Mammary epithelial cell (primary cell): ENCODE measurements at regions of chr10 and their contacts with region 1.

Region 1: DNA sequence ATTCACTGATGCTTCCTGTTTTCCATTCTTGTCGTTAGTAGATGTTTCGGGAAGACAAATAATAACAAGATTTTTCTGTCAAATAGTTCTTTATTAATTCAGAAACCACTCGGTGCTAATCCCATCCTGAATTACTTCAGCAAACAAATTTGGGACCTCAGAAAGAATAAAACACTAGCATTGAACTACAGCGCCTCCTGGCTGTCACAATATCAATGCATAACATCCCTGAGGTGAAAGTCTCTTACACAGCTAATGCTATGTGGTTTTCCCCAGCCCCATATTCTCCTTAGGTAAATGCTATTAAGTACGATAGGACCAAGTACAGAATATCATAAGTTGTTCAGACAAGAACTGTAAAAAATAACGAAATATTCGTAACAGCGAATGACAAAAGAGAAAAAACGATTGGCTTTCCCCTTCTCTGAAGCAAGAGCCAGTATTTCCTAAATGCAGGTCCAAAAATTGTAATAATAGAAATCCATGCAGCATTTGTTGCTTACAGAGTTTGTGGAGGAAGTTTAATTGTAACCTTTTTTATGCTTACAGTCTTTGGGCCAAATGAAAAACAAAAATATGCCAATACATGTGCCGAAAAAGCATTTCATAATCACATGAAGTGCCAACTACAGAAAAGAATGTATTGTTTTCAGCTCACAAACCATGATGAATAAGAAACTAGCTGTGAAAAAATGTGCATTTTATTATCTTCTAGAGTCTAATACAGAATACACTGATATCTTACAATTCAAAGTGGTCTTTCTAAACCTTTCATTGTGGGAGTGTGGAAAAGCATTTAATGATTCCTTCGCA is 47.3 kb downstream of the MYPN start:
- DNase-seq: peak; percentile 43
- H3K4me3 ChIP-seq: no peak overlapping the region
- H3K27ac ChIP-seq: no peak overlapping the region
- H3K4me1 ChIP-seq: peaks cover 14% of the 10 kb centered on the region
- H3K27me3 ChIP-seq: no peaks in the 10 kb centered on the region
- CTCF ChIP-seq: peak; percentile 84 to 97

Region 2: DNA sequence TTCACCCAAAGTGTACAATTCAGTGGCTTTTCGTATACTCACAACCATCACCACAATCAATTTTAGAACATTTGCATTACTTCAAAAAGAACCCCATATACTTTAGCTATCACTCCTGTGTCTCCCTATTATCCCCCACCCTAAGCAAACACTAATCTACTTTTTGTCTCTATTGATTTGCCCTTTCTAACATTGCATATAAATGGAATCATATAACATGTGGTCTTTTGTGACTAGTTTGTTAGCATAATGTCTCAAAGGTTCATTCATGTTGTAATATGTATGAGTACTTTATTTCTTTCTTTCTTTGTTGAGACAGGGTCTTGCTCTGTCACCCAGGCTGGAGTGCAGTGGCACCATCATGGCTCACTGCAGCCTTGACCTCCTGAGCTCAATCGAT is 297.6 kb before region 1 on chr10:
- CTCF ChIA-PET with region 1: no interaction called
- dilution Hi-C with region 1: no loop called
- in situ Hi-C with region 1: no loop called
- intact Hi-C with region 1: loop called (anchors 5 kb)
- DNase-seq: no peak
- H3K4me3 ChIP-seq: no peak overlapping the region
- H3K27ac ChIP-seq: no peak overlapping the region
- H3K4me1 ChIP-seq: peaks cover 3% of the 10 kb centered on the region
- H3K27me3 ChIP-seq: no peaks in the 10 kb centered on the region
- CTCF ChIP-seq: no peak

Region 3: GRCh38 chr10:68088744-68089143 is 67.8 kb before region 1 on chr10:
- CTCF ChIA-PET with region 1: no interaction called
- dilution Hi-C with region 1: no loop called
- in situ Hi-C with region 1: loop called (anchors 5 kb)
- intact Hi-C with region 1: loop called (anchors 1 kb)
- DNase-seq: peak; percentile 85
- H3K4me3 ChIP-seq: no peak overlapping the region
- H3K27ac ChIP-seq: peak overlapping the region; percentile 61
- H3K4me1 ChIP-seq: peaks cover 48% of the 10 kb centered on the region
- H3K27me3 ChIP-seq: no peaks in the 10 kb centered on the region
- CTCF ChIP-seq: no peak

Region 4: GRCh38 chr10:68135922-68136718 is 20.5 kb before region 1 on chr10:
- CTCF ChIA-PET with region 1: no interaction called
- dilution Hi-C with region 1: no loop called
- in situ Hi-C with region 1: no loop called
- intact Hi-C with region 1: loop called (anchors 1 kb)
- DNase-seq: peak; percentile 88
- H3K4me3 ChIP-seq: peak overlapping the region; percentile 7 to 38 (median 26)
- H3K27ac ChIP-seq: peak overlapping the region; percentile 93
- H3K4me1 ChIP-seq: peaks cover 23% of the 10 kb centered on the region
- H3K27me3 ChIP-seq: no peaks in the 10 kb centered on the region
- CTCF ChIP-seq: no peak

Region 5: DNA sequence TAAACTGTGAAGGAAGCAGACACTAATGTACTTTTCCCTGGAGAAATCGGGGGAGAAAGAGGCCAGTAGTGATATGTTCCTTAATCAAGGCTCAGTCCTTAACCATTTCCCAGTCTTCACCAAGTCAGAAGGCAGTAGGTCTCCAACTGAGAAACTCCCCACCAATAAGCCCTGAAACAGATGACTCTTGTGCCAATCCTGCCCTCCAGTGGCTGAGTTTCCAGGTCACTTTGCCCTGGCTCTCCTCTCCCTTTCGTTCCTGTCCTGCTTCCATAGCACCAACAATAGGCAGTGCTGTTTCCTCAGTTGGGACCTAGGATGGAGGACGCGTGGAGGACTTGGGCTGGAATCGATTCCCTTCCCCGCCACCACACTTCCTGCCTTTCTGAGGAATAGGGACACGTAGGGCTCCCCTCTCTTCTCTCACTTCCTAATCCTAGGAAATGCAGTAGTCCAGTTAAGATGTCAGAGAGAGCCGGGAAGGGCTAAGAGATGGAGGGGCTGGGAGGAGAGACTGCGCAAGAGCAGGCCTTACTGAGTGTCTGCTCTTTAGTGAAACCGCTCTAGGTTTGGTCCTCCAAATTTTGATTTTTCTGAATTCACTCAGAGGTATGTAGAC is 52.0 kb after region 1 on chr10:
- CTCF ChIA-PET with region 1: no interaction called
- dilution Hi-C with region 1: no loop called
- in situ Hi-C with region 1: no loop called
- intact Hi-C with region 1: loop called (anchors 1 kb)
- DNase-seq: peak; percentile 59
- H3K4me3 ChIP-seq: no peak overlapping the region
- H3K27ac ChIP-seq: no peak overlapping the region
- H3K4me1 ChIP-seq: no peaks in the 10 kb centered on the region
- H3K27me3 ChIP-seq: no peaks in the 10 kb centered on the region
- CTCF ChIP-seq: peak; percentile 77 to 82

Region 6: DNA sequence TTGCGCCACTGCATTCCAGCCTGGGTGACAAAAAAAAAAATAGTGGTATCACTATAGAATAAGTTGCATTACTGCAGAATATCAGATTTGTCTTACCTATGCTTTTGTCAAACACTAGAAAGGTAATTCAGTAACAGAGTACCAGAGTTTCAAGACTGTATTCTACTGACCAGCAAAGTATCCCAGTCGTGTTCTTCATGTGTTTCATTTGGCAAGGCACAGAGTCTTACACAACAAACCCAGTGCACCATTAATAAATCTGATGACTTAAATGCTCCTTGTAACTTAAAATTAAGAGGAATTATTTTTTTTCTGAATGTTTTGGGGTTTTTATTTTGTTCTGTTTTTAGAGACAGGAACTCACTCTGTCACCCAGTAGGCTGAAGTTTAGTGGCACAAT is 210.5 kb after region 1 on chr10:
- CTCF ChIA-PET with region 1: no interaction called
- dilution Hi-C with region 1: no loop called
- in situ Hi-C with region 1: no loop called
- intact Hi-C with region 1: no loop called
- DNase-seq: no peak
- H3K4me3 ChIP-seq: no peak overlapping the region
- H3K27ac ChIP-seq: no peak overlapping the region
- H3K4me1 ChIP-seq: no peaks in the 10 kb centered on the region
- H3K27me3 ChIP-seq: no peaks in the 10 kb centered on the region
- CTCF ChIP-seq: no peak